T-cell (primary cell): ENCODE measurements at regions of chr20 and their contacts with region 1.

Region 1: GRCh38 chr20:59258221-59258621 is 42.2 kb upstream of the EDN3 start:
- DNase-seq: peak in 3 of 35 experiments; percentile 4 to 24 (median 17)
- ATAC-seq: peak; percentile 45 to 64 (median 52)
- H3K4me3 ChIP-seq: no peak overlapping the region
- H3K4me3 Mint-ChIP-seq: peak overlapping the region in 1 of 3 donors; percentile 34
- H3K27ac ChIP-seq: no peak overlapping the region
- H3K27ac Mint-ChIP-seq: peak overlapping the region; percentile 17 to 85
- H3K4me1 ChIP-seq: peaks cover 20 to 23% of the 10 kb centered on the region in 2 experiments
- H3K4me1 Mint-ChIP-seq: peaks cover 40 to 64% (median 49%) of the 10 kb centered on the region in 3 donors
- H3K27me3 ChIP-seq: no peaks in the 10 kb centered on the region
- H3K27me3 Mint-ChIP-seq: no peaks in the 10 kb centered on the region

Region 2: DNA sequence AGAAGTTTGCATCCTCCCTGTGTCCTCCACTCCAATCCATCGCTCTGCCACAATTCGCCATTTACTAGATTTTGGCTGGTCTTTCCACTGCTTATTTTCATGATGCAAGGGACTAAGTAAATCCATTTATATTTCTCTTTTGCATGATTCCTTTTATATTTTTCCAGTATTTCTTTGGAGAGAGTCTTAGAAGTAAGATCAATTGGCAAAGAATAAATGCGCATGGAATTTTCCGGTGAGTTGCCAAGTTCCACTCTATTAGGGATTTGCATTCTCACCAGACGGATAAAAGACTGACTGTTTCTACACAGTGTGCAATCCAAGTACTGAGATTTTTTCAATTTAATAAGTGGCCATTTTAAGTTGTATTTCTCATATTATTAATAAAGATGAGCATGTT is 254.4 kb after region 1 on chr20:
- CTCF ChIA-PET with region 1: no interaction called
- POLR2A ChIA-PET with region 1: interaction called in 1 of 2 experiments, 10 read pairs
- DNase-seq: no peak
- ATAC-seq: no peak
- H3K4me3 ChIP-seq: no peak overlapping the region
- H3K4me3 Mint-ChIP-seq: no peak overlapping the region
- H3K27ac ChIP-seq: no peak overlapping the region
- H3K27ac Mint-ChIP-seq: no peak overlapping the region
- H3K4me1 ChIP-seq: no peaks in the 10 kb centered on the region
- H3K4me1 Mint-ChIP-seq: peaks cover 0 to 2% (median 0%) of the 10 kb centered on the region in 3 donors
- H3K27me3 ChIP-seq: peaks cover 2 to 29% of the 10 kb centered on the region in 2 experiments
- H3K27me3 Mint-ChIP-seq: peaks cover 41 to 47% of the 10 kb centered on the region in 2 donors